ENCODE measurements at regions of chr19 and their contacts with region 1.

Region 1: GRCh38 chr19:38402967-38403861 is at the start of gene FAM98C:
- DNase-seq: peak; percentile 94
- H3K4me3 ChIP-seq: peak within 1 kb of the TSS; percentile 58 to 94 (median 83)
- H3K27ac ChIP-seq: no peak within 1 kb of the TSS
- H3K4me1 ChIP-seq: no peaks in the 10 kb centered on the region
- H3K27me3 ChIP-seq: no peaks in the 10 kb centered on the region
- CTCF ChIP-seq: peak; percentile 76 to 93
- total RNA-seq, gene FAM98C: 10.5 to 14.9 TPM

Region 2: DNA sequence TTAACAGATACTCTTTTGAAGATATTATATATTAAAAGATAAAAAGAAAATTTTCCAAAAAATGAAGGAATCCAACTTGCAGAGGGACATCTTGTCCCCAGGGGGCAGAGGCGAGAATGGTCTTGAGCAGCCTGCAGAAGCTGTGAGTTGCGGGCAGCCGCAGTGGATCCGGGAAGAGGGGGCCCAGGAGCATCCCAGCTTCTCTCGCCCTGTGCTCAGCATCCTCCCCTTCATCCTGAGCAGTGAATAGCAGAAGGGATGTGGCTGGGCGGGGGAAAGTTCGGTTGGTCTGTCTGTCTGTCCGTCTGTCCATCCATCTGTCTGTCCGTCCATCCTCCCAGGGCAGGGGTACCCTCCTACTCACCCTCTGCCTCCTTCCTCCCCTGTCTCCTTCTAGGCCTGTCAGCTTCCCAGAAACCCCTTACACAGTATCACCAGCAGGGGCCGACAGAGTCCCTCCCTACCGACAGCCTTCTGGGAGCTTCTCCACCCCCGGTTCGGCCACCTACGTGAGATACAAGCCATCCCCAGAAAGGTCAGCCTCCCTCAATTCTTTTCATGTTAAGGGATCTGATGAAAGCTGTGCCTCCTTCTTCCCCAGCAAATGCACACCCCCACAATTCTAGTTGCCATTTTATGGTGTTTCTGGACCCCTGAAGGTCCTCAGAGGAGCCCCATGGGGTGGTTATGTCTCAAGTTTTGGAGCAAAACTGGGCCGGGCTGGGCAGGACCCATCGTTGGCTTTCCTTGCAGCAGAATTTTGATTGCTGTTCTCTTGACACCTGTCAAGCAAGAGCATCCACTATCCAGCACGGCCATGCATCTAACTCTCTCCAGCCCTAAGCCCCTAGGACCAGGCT is 260.8 kb before region 1 on chr19:
- CTCF ChIA-PET with region 1: no interaction called
- dilution Hi-C with region 1: no loop called
- in situ Hi-C with region 1: no loop called
- intact Hi-C with region 1: no loop called
- DNase-seq: peak; percentile 32
- H3K4me3 ChIP-seq: no peak overlapping the region
- H3K27ac ChIP-seq: no peak overlapping the region
- H3K4me1 ChIP-seq: no peaks in the 10 kb centered on the region
- H3K27me3 ChIP-seq: no peaks in the 10 kb centered on the region
- CTCF ChIP-seq: peak; percentile 83 to 90

Region 3: GRCh38 chr19:38367770-38368169 is 35.4 kb before region 1 on chr19:
- CTCF ChIA-PET with region 1: no interaction called
- dilution Hi-C with region 1: no loop called
- in situ Hi-C with region 1: no loop called
- intact Hi-C with region 1: no loop called
- DNase-seq: no peak
- H3K4me3 ChIP-seq: no peak overlapping the region
- H3K27ac ChIP-seq: no peak overlapping the region
- H3K4me1 ChIP-seq: no peaks in the 10 kb centered on the region
- H3K27me3 ChIP-seq: no peaks in the 10 kb centered on the region
- CTCF ChIP-seq: no peak

Region 4: DNA sequence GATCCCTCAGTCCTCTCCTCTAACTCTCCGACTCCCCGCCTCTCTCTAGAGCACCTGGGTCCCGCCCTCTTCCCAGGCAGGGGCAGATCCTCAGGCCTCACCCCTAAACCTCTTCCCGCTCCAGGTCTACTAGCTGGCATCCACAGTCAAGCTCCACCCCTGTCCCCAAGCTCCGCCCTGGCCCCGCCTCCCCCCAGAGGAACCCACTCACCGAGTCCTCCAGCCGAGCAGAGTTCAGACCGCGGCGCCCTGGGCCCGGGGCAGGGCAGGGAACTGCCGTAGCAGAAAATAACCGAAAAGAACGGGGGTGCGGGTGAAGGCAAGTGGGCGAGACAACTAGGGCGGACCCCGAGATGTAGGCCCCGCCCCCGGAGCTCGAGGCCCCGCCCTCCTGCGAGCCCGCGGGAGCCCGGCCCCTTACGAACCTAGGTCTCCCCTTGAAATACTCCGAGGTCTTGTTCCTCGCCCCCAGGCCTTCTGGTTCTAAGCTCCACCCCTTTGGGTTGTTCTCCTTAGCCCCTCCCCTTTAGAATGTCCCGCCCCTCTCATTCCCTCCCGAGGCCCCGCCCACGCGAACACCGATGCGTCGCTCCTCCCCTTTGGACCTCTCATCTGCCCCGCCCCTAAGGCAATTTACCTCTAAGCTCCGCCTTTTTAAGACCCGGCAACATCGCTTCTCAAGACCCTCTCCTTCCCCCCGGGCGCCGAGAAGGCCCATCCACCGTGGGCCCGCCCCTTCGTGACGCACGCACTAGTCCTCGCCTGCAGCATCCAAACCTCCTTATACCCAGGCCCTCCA is 15.5 kb before region 1 on chr19 and contains the start of gene GGN:
- CTCF ChIA-PET with region 1: interaction called, 16 read pairs
- dilution Hi-C with region 1: no loop called
- in situ Hi-C with region 1: no loop called
- intact Hi-C with region 1: no loop called
- DNase-seq: peak; percentile 87
- H3K4me3 ChIP-seq: peak within 1 kb of the TSS; percentile 38 to 57 (median 50)
- H3K27ac ChIP-seq: no peak within 1 kb of the TSS
- H3K4me1 ChIP-seq: peaks cover 24% of the 10 kb centered on the region
- H3K27me3 ChIP-seq: no peaks in the 10 kb centered on the region
- CTCF ChIP-seq: no peak
- total RNA-seq, gene GGN: 0.17 to 0.68 TPM

Region 5: GRCh38 chr19:38544034-38544958 is 141.1 kb after region 1 on chr19:
- CTCF ChIA-PET with region 1: no interaction called
- dilution Hi-C with region 1: no loop called
- in situ Hi-C with region 1: no loop called
- intact Hi-C with region 1: loop called (anchors 1 kb)
- DNase-seq: peak; percentile 93
- H3K4me3 ChIP-seq: peak overlapping the region in 2 of 3 experiments; percentile 10 to 27
- H3K27ac ChIP-seq: peak overlapping the region; percentile 45
- H3K4me1 ChIP-seq: peaks cover 16% of the 10 kb centered on the region
- H3K27me3 ChIP-seq: no peaks in the 10 kb centered on the region
- CTCF ChIP-seq: peak; percentile 69 to 73

Region 6: DNA sequence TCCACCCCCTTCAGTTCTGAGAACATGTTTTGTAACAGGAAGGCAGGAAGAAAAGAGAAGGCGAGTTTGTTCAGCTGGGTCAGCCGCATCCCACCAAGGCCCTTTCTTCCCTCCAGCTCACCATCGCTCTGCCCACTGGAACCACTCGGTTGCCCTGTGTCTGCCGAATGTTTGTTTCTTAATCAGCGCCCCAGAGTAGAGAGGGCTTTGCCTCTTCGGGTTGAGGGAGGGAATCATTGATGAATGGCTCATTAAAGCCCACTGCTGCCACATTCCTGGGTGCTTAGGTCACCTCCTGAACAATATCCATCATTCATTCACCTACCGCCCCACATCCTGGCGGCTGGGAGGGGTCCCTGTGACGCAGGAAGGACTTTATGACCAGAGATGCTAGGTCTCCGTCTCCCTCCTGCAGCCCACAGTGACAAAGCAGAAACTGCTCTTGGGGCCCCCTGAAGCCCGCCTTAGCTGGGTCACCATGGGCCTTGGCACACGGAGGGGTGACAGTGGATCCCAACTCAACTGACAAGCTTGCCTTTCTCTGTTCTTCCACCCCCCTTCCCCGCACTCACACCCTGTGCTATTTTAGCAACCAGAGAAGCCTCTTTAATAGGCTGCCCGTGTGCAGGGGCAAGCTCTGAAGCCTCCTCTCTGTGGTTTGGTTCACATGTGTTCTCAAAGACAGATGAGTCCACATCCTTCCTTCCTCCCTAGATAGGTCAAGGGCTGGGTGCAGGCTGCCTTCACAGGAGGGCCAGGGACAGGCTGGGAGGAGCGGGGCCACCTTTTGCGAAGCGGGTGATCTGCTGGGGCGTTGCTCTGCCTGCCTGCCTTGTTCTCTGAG is 290.4 kb after region 1 on chr19:
- CTCF ChIA-PET with region 1: no interaction called
- dilution Hi-C with region 1: no loop called
- in situ Hi-C with region 1: no loop called
- intact Hi-C with region 1: loop called (anchors 10 kb)
- DNase-seq: peak; percentile 98
- H3K4me3 ChIP-seq: peak overlapping the region in 2 of 3 experiments; percentile 5 to 15
- H3K27ac ChIP-seq: peak overlapping the region; percentile 99
- H3K4me1 ChIP-seq: peaks cover 93% of the 10 kb centered on the region
- H3K27me3 ChIP-seq: no peaks in the 10 kb centered on the region
- CTCF ChIP-seq: no peak

Region 7: GRCh38 chr19:38891771-38892170 is 488.6 kb after region 1 on chr19:
- CTCF ChIA-PET with region 1: no interaction called
- dilution Hi-C with region 1: no loop called
- in situ Hi-C with region 1: no loop called
- intact Hi-C with region 1: loop called (anchors 1 kb)
- DNase-seq: no peak
- H3K4me3 ChIP-seq: no peak overlapping the region
- H3K27ac ChIP-seq: no peak overlapping the region
- H3K4me1 ChIP-seq: no peaks in the 10 kb centered on the region
- H3K27me3 ChIP-seq: no peaks in the 10 kb centered on the region
- CTCF ChIP-seq: no peak

Region 8: DNA sequence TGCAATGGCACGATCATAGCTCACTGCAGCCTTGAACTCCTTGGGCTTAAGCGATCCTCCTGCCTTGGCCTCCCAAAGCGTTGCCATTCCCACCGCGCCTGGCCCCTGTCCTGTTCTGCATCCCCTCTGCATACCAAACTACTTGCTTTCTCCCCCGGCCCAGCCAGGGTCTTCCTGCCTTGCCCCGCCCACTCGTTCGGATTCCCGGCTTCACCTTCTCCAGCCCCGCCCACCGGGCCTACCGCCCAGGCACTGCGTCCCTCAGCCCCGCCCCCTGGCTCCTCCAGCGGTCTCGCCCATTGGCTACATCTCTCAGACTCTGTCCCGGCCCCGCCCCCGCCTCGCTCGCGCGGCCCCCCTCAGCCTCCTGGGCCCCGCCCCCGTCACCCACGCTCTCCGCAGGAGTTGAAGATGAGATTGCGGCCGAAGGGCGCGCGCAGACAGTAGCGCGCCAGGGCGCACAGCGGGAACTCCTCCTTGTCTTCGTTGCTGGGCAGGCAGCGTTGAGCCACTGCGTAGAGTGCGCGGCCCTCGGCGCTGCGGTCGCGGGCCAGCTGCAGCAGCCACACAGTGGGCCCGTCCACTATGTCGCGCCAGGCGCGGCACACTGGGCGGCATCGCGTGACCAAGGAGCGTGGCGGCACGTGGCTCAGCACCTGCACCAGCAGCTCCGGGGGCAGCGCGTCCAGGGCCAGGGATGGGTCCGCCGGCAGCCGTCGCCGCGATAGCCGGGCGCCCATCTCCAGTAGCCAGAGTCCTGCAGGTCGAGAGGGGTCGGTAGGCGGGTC is 546.6 kb after region 1 on chr19:
- CTCF ChIA-PET with region 1: no interaction called
- dilution Hi-C with region 1: no loop called
- in situ Hi-C with region 1: loop called in 1 of 2 experiments (anchors 25 kb)
- intact Hi-C with region 1: loop called (anchors 1 kb)
- DNase-seq: peak; percentile 54
- H3K4me3 ChIP-seq: peak overlapping the region in 1 of 3 experiments; percentile 12
- H3K27ac ChIP-seq: no peak overlapping the region
- H3K4me1 ChIP-seq: peaks cover 4% of the 10 kb centered on the region
- H3K27me3 ChIP-seq: no peaks in the 10 kb centered on the region
- CTCF ChIP-seq: no peak